Transverse colon (tissue), 4 donors: ENCODE measurements at regions of chr13 and their contacts with region 1.

Region 1: DNA sequence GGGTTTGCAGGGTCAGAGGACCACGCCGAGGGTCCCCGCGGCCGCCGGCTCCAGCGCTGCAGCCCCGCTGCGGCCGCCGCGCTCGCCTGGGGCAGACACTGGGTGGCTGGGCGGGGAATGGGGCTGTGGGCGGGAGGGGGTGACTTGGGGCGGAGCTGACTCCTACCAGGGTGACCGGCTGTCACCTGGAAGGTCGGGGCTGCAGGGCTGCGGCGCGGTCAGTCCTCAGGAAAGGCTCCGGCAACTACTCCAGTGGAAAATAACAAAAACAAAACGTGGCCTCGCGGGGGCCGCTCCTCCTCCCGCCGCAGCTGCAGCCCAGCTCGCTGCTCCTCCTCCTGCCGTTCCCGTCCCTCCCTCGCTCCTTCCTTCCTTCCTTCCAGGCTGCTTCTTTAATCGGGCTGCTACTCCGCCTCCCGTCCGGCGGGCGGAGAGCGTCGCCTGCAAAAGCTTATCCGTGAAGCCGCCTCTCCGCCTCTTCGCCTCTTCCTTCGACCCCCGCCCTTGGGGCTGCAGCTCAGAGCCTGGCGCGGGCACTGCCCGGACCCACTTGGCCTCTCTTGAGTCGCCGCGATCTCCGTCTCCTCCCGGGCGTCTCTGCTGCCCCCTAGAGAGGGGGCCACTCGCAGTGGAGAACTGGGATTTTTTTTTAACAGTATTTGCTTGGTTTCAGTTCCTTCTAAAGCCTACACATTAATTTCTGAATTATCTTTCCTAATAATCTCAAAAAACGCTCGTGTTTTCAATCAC is at the start of gene TBC1D4:
- DNase-seq: peak; percentile 87
- H3K4me3 ChIP-seq: peak within 1 kb of the TSS; percentile 79 to 92 (median 86)
- H3K27ac ChIP-seq: peak within 1 kb of the TSS; percentile 75 to 90 (median 84)
- H3K4me1 ChIP-seq: peaks cover 0 to 19% (median 11%) of the 10 kb centered on the region in 4 donors
- H3K27me3 ChIP-seq: peaks cover 6% of the 10 kb centered on the region
- CTCF ChIP-seq: peak; percentile 79 to 83 (median 81)
- EP300 ChIP-seq: no peak
- POLR2A ChIP-seq: peak; percentile 41
- total RNA-seq, gene TBC1D4: 31.0 to 91.3 (median 46.1) TPM

Region 2: GRCh38 chr13:75357576-75358289 is 124.5 kb before region 1 on chr13:
- in situ Hi-C with region 1: loop called in 1 of 4 experiments (anchors 25 kb)
- intact Hi-C with region 1: no loop called
- DNase-seq: no peak
- H3K4me3 ChIP-seq: no peak overlapping the region
- H3K27ac ChIP-seq: no peak overlapping the region
- H3K4me1 ChIP-seq: no peaks in the 10 kb centered on the region
- H3K27me3 ChIP-seq: no peaks in the 10 kb centered on the region
- CTCF ChIP-seq: peak; percentile 27 to 49 (median 40)
- EP300 ChIP-seq: no peak
- POLR2A ChIP-seq: no peak

Region 3: DNA sequence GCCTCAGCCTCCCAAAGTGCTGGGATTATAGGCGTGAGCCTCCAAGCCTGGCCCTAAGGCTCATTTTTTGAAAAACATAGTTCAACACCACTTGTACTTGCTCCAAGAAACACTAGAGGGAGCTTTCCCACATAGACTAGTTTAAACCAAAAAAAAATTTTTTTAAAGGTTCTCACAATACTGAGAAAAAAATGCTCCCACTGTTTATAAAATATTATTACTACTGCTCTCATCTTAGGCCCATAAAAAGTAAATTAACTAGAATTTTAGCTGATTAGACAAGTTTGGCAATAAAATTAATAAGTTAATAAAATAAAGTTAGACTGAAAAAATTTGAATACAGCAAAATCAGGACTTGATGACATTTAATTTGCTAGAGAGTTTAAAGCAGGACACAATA is 109.7 kb before region 1 on chr13:
- in situ Hi-C with region 1: loop called in 3 of 4 experiments (anchors 10 to 25 kb)
- intact Hi-C with region 1: no loop called
- DNase-seq: no peak
- H3K4me3 ChIP-seq: no peak overlapping the region
- H3K27ac ChIP-seq: no peak overlapping the region
- H3K4me1 ChIP-seq: peaks cover 0 to 13% (median 5%) of the 10 kb centered on the region in 4 donors
- H3K27me3 ChIP-seq: no peaks in the 10 kb centered on the region
- CTCF ChIP-seq: peak; percentile 67 to 77 (median 74)
- EP300 ChIP-seq: no peak
- POLR2A ChIP-seq: no peak

Region 4: DNA sequence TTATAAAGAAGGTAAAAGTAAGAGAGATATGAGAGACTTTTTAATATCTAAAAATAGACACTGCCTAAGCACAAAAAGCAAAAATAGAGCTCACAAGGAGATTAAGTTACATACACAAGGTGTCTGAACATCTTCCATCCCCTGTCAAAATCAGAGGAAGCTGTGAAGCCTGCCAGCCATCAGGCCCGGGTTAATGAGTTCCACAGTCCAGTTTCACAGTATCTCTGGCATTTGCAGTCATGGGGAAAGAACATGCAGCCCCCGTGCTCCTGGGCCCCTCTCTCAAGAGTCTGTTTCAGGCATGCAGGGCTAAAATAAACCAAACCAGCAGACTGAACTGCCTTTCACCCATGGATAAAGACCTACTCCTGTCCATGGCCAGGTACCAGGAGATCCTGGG is 79.5 kb before region 1 on chr13:
- in situ Hi-C with region 1: no loop called
- intact Hi-C with region 1: no loop called
- DNase-seq: no peak
- H3K4me3 ChIP-seq: no peak overlapping the region
- H3K27ac ChIP-seq: no peak overlapping the region
- H3K4me1 ChIP-seq: no peaks in the 10 kb centered on the region
- H3K27me3 ChIP-seq: no peaks in the 10 kb centered on the region
- CTCF ChIP-seq: no peak
- EP300 ChIP-seq: no peak
- POLR2A ChIP-seq: no peak

Region 5: DNA sequence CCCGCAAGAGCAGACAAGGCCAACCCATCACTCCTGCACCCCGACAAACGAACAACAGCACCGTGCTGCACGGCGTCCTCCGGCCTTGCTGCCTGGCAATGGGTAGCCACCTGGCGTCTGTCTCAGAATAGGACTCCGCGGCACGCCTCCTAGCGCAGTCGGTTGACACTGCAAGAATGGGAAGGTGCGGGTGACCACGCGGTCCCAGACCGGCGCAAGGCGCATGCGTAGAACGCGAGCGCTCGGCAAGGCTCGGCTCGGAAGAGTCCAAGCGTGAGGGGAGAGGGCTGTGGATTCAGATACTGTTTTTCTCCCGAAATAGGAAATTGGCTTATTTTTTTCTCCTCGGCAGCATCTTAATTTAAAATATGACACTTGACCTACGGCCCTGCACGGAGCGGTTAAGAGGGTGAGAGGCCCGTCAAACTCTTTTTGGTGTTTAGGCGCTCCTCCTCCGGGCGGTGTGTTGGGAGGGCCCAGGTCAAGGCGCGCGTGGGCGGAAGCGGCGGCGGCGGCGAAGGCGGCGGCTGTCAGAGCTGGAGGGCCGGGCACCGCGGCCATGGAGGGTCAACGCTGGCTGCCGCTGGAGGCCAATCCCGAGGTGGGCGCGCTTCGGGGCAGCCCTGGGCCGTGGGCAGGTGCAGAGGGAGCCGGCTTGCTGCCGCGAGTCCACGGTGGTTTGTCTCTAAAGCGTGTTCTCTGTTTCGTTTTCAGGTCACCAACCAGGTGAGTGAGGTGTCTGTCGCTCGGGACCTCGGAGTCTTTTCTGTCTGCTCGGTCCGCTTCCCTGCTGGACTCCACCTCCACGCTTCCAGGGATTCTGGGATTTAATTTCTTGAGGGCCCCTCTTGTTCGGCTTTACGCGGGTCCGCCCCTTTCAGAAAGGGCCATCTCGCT is 67.3 kb after region 1 on chr13 and contains the start of gene UCHL3:
- in situ Hi-C with region 1: loop called in 1 of 4 experiments (anchors 10 kb)
- intact Hi-C with region 1: loop called (anchors 10 kb)
- DNase-seq: peak; percentile 98
- H3K4me3 ChIP-seq: peak within 1 kb of the TSS; percentile 77 to 93 (median 82)
- H3K27ac ChIP-seq: peak within 1 kb of the TSS; percentile 82 to 87 (median 84)
- H3K4me1 ChIP-seq: peaks cover 4 to 17% (median 7%) of the 10 kb centered on the region in 4 donors
- H3K27me3 ChIP-seq: no peaks in the 10 kb centered on the region
- CTCF ChIP-seq: peak; percentile 81 to 97 (median 83)
- EP300 ChIP-seq: no peak
- POLR2A ChIP-seq: peak; percentile 75
- total RNA-seq, gene UCHL3: 3.4 to 55.9 (median 19.3) TPM

Region 6: GRCh38 chr13:75566658-75567057 is 84.4 kb after region 1 on chr13:
- in situ Hi-C with region 1: no loop called
- intact Hi-C with region 1: no loop called
- DNase-seq: no peak
- H3K4me3 ChIP-seq: no peak overlapping the region
- H3K27ac ChIP-seq: no peak overlapping the region
- H3K4me1 ChIP-seq: no peaks in the 10 kb centered on the region
- H3K27me3 ChIP-seq: no peaks in the 10 kb centered on the region
- CTCF ChIP-seq: no peak
- EP300 ChIP-seq: no peak
- POLR2A ChIP-seq: no peak